ENCODE measurements at regions of chr1 and their contacts with region 1.

Region 1: DNA sequence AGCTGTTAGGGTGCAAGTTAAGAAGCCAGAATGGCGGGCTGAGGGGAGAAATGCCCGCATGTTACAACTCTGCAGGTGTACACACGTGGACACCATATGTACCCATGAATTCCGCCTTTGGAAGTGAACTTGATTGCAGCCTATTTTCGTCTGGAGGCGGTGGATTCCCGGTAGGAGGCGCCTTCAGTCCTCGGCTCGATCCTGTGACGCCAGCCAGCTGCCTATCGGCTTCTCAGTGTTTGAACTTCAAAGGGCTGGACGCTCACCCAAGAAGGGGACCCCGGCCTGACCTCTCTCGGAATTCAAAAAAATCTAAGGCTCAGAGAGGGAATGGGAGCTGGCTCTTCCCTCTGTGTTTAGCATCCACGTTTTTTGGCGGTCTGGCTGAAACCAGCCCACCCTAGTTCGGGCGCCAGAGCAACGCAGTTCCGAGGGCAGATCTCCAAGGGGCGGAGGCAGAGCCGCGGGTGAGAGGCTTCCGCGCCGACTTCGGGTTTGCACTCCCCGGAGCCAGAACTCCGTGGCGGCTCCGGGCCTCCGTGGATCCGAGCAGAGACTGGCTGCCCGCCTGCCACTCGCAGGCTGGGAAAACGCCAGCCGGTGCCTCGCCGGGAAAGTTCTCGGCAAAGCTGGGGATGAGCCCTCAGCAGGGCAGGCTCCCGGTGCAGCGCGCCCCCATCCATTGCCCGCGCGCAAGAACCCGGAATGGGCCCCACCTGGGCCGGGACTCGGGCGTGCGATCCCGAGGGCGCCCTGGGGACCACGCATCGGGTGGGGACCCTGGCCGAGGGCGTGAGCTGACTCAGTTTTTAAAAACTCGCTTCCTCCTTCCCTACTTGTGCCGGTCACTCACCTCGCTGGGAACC is 996 bp upstream of the TMEM51 start:
- DNase-seq: peak; percentile 97
- H3K4me3 ChIP-seq: peak overlapping the region; percentile 44 to 93 (median 84)
- H3K27ac ChIP-seq: peak overlapping the region; percentile 93 to 99 (median 96)
- H3K4me1 ChIP-seq: peaks cover 4 to 49% (median 45%) of the 10 kb centered on the region in 4 donors
- H3K27me3 ChIP-seq: no peaks in the 10 kb centered on the region
- CTCF ChIP-seq: peak; percentile 45 to 78 (median 68)
- EP300 ChIP-seq: no peak
- POLR2A ChIP-seq: peak; percentile 35 to 37

Region 2: DNA sequence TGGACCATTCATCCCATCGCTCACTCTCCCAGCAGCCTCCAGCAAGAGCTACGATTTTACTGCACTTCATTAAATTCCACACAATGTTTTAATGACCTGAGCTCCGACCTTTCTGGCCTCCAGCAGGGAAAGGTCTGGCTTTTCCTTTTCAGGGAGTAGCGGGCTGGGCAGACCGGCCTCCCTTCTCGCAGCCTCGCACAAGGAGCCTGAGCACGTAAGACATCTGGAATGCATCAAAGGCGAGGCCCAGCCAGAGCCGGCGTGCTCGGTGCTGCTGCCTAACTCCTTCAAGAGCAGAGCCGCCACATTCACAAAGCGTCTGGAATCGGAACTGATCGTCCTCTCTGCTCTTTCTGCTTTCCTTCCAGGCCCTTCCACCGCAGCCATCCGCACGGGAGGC is 62.0 kb after region 1 on chr1:
- intact Hi-C with region 1: loop called (anchors 1 kb)
- DNase-seq: peak; percentile 93
- H3K4me3 ChIP-seq: no peak overlapping the region
- H3K27ac ChIP-seq: peak overlapping the region; percentile 28 to 91 (median 86)
- H3K4me1 ChIP-seq: peaks cover 0 to 56% (median 38%) of the 10 kb centered on the region in 4 donors
- H3K27me3 ChIP-seq: no peaks in the 10 kb centered on the region
- CTCF ChIP-seq: peak in 1 of 4 experiments; percentile 11
- EP300 ChIP-seq: no peak
- POLR2A ChIP-seq: no peak

Region 3: DNA sequence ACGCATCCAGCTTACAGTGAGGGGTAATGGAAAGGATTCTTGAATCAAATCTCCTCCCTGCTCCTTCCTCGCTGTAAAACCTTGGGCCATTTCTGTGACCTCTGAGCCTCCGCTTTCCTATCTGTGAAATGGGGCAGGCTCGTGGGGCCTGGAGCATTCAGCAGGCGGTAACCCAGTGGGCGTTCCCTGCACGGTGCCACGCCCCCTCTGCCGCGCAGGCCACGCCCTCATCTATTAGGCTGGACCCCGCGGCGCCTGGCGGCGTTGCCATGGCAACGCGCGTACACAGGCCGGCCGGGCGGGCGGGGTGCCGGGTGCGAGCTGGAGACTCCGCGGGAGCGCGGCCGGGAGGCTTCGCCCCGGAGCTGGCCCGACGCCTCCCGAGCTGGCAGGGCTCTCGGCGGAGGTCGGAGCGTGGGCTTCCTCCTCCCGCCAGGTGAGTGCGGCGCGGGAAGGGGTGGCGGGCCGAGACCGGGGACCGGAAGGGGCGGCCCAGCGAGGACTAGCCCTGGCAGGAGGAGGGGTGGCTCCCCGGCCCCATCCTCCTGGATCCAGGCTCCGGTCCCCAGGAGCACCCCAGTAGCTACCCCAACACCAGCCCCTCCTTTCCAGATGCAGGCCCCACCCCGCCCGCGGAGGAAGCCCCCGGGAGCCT is 94.5 kb after region 1 on chr1 and contains the start of gene FHAD1:
- intact Hi-C with region 1: loop called (anchors 1 kb)
- DNase-seq: peak; percentile 74
- H3K4me3 ChIP-seq: peak within 1 kb of the TSS; percentile 23 to 57 (median 49)
- H3K27ac ChIP-seq: peak within 1 kb of the TSS in 3 of 4 donors; percentile 80 to 92 (median 83)
- H3K4me1 ChIP-seq: peaks cover 0 to 56% (median 54%) of the 10 kb centered on the region in 4 donors
- H3K27me3 ChIP-seq: no peaks in the 10 kb centered on the region
- CTCF ChIP-seq: no peak
- EP300 ChIP-seq: no peak
- POLR2A ChIP-seq: no peak
- total RNA-seq, gene FHAD1: 0.27 to 1.1 TPM in 2 of 4 donors, not detected in the others

Region 4: GRCh38 chr1:15272009-15272788 is 119.6 kb after region 1 on chr1:
- intact Hi-C with region 1: loop called (anchors 1 kb)
- DNase-seq: peak; percentile 83
- H3K4me3 ChIP-seq: no peak overlapping the region
- H3K27ac ChIP-seq: no peak overlapping the region
- H3K4me1 ChIP-seq: peaks cover 0 to 10% (median 6%) of the 10 kb centered on the region in 4 donors
- H3K27me3 ChIP-seq: no peaks in the 10 kb centered on the region
- CTCF ChIP-seq: peak; percentile 71 to 83 (median 80)
- EP300 ChIP-seq: no peak
- POLR2A ChIP-seq: no peak

Region 5: GRCh38 chr1:15430787-15431570 is 278.4 kb after region 1 on chr1:
- intact Hi-C with region 1: loop called (anchors 10 kb)
- DNase-seq: no peak
- H3K4me3 ChIP-seq: no peak overlapping the region
- H3K27ac ChIP-seq: no peak overlapping the region
- H3K4me1 ChIP-seq: peaks cover 0 to 46% (median 29%) of the 10 kb centered on the region in 4 donors
- H3K27me3 ChIP-seq: no peaks in the 10 kb centered on the region
- CTCF ChIP-seq: peak; percentile 91 to 98 (median 97)
- EP300 ChIP-seq: no peak
- POLR2A ChIP-seq: no peak

Region 6: DNA sequence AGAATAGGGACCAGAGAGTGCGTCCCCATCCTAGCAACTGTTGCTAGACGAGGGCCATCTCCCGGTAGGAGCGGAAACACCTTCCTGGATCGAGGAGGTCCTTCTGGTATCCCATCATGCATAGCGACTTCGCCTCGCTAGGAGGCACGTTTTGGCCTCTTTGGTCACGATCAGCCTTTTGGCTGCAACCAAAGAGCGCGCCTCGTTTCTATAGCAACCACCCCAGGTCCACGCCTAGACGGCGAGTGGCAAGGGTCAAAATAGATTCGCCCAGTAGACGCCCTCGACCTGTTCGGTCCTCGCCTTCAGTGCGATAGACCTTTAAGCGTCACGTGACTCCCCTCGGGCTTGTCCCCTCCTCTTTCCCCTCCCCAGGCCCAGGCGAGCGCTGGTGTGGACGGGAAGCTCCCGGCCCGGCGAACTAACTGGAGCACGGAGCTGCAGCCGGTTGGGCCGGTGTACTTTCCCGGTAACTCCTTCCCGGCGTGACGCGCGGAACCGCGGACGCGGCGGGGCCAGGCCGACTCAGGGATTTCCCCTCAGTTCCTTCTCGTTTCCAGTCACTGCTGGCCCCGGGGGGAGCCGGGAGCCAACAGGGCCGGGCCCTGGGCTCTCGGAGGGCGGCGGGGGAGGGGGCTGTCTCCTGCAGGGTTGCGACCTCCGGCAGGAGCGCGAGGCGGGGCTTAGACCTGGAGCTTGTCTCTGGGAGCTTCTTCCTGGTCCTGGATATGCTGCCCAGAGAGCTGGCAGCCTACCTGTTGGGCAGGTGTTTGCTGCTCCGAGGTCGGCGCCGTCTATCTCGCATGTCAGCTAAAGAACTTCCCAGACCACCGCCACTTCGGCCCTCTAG is 374.2 kb after region 1 on chr1 and contains the start of gene DNAJC16:
- intact Hi-C with region 1: loop called (anchors 10 kb)
- DNase-seq: peak; percentile 100
- H3K4me3 ChIP-seq: peak within 1 kb of the TSS; percentile 93 to 99 (median 98)
- H3K27ac ChIP-seq: peak within 1 kb of the TSS; percentile 97 to 100 (median 98)
- H3K4me1 ChIP-seq: peaks cover 0 to 41% (median 33%) of the 10 kb centered on the region in 4 donors
- H3K27me3 ChIP-seq: no peaks in the 10 kb centered on the region
- CTCF ChIP-seq: peak in 1 of 4 experiments; percentile 16
- EP300 ChIP-seq: peak in 2 of 4 donors; percentile 18 to 98
- POLR2A ChIP-seq: peak; percentile 67 to 74
- total RNA-seq, gene DNAJC16: 11.4 to 20.5 (median 16.8) TPM

Measured in sigmoid colon (tissue), 7 donors.